PC-9 (cell line): ENCODE measurements at regions of chr12 and their contacts with region 1.

Region 1: DNA sequence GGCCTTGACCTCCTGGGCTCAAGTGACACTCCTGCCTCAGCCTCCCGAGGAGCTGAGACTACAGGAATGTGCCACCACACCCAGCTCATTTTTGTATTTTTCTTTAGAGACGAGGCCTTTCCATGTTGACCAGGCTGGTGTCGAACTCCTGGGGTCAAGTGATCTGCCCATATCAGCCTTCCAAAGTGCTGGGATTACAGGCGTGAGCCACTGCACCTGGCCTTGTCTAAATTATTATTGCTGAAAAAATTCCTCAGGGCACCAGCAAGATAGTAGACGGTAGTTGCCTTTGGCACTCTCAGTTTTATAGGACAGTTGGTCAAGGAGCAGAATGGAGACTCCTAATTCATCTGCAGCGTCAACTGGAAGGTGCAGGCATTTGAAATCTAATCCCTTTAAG is 2.5 kb upstream of the AICDA start:
- DNase-seq: no peak
- H3K4me3 ChIP-seq: no peak overlapping the region
- H3K27ac ChIP-seq: no peak overlapping the region
- H3K4me1 ChIP-seq: peaks cover 6% of the 10 kb centered on the region
- H3K27me3 ChIP-seq: no peaks in the 10 kb centered on the region
- CTCF ChIP-seq: no peak

Region 2: DNA sequence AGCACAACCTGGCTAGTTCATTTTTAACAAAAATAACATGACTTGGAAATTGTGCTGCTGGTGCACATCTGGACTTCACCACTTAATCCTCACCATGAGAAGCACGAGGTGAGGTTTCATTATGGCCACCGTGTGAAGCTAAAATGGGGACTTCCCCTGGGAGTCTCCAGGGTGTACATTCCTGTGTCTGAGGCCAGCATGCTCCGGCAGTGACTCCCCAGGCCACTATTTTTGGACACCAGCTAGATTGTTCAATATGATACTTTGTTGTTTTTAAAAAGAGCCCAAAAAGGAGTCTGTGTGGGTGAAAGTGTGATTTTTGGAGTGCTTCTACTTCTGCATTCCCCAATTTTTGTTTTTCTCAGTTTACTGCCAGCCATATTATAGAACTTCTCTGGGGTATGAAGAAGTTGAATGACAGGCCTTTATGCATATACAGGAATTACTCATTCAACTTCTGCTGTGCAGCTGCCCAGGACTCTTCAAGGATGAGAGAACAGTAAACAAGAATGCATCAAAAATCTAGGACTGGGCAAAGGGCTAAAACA is 14.4 kb after region 1 on chr12:
- CTCF ChIA-PET with region 1: interaction called, 10 read pairs
- POLR2A ChIA-PET with region 1: no interaction called
- intact Hi-C with region 1: no loop called
- DNase-seq: no peak
- H3K4me3 ChIP-seq: no peak overlapping the region
- H3K27ac ChIP-seq: no peak overlapping the region
- H3K4me1 ChIP-seq: no peaks in the 10 kb centered on the region
- H3K27me3 ChIP-seq: no peaks in the 10 kb centered on the region
- CTCF ChIP-seq: no peak